ENCODE measurements at regions of chr21 and their contacts with region 1.

Region 1: DNA sequence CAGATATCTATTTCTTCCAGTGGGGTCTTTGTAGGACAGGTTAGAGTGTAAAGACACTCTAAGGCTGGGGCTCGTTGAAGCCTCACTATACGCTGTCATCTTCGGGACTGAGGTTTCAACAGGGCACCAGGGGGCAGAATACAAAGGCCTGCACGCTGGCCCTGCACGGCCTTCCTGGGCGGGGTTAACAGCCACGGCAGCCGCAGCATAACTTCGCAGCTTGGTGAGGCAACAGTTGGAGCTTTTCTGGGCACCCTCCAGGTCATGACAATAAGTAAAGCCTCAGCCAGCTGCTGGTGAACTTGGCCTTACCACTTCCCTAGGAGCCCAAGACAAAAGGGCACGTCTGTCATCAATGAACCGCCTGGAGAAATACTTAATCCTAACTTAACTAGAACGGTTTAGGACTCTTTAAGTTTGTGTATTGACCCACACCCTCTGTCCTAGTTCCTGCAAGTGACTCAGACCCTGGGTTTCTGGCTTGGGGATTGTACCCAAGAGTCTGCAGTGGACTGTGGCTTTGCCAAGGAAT is 2.3 kb upstream of the RUNX1 start:
- DNase-seq: peak; percentile 91
- ATAC-seq: peak; percentile 52
- H3K4me3 Mint-ChIP-seq: peak overlapping the region; percentile 87
- H3K27ac Mint-ChIP-seq: peak overlapping the region; percentile 95
- H3K4me1 Mint-ChIP-seq: peaks cover 49% of the 10 kb centered on the region
- H3K27me3 Mint-ChIP-seq: no peaks in the 10 kb centered on the region

Region 2: DNA sequence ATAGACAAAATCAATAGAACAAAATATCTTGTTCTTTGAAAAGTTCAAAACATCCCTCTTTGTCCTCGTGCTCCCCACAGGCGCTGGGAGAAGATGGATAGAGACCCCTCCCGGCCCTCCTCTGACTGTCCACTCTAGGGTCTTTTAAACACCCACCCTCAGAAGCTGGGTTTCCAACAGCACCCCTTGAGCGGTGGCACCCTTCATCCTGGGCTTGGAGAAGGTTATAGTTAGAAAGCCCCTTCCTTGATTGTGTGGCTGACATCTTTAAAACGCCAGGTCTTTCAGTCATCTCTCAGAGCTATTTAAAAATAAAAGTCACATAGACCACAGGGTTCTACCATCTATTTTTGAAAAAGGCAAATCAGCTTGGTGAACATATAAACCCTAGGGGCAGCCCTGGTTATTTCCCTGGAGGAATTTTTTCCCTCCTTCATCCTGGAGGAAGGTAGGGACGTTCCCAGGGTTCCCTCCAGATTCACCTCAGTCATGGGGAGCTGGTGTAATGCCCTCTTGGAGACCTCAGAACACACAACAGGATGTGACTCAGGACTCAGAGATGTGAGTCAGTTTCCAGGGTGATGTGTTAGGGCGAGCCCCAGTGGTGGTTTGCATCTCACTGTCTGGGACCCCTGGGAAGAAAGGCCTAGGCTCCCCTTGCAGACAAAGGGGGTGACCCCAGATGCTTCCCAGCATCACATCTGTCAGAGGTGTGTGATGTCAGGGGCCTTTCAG is 244.0 kb before region 1 on chr21:
- CTCF ChIA-PET with region 1: no interaction called
- POLR2A ChIA-PET with region 1: interaction called, 3 read pairs
- intact Hi-C with region 1: loop called (anchors 2 kb)
- DNase-seq: peak; percentile 83
- ATAC-seq: peak; percentile 92
- H3K4me3 Mint-ChIP-seq: no peak overlapping the region
- H3K27ac Mint-ChIP-seq: peak overlapping the region; percentile 87
- H3K4me1 Mint-ChIP-seq: peaks cover 90% of the 10 kb centered on the region
- H3K27me3 Mint-ChIP-seq: no peaks in the 10 kb centered on the region

Region 3: DNA sequence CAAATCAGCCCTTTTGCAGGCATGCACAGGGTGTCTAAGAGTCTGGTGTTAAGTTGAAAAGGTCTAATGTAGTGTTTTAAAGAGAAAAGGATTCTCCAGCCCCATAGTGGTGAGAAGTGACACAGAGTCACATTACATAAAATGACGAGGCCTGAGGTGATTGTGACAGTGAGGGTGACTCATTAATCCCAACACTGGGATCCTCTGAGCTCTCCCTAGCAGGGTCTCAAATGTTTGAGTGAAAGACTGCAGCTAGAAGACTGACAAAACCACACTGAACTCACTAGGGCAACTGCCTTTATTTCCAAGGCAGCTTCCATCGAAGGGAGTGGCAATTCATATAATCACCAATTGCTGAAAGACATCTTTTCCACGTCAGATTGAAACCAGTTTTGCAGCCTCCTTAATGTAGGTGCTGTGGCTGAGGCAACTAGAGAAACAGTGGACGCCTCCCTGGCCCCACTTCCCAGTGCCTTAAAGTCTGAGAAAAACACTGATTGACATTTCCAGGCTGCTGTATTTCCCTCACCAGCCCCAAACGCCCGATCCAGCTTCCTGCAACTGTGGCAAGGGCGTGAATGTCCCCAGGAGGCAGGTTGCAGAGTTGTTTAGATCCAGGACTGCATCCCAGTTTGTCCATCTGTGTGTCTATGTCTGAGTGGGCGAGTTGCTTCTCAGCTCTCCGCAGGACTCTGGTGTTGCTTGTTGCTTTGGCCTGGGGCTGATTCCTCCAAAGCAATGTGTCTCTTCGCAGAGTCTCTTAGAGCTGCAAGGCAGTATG is 83.7 kb before region 1 on chr21:
- CTCF ChIA-PET with region 1: interaction called, 5 read pairs
- POLR2A ChIA-PET with region 1: interaction called, 8 read pairs
- intact Hi-C with region 1: loop called in 1 of 2 experiments (anchors 1 kb)
- DNase-seq: peak; percentile 73
- ATAC-seq: peak; percentile 70
- H3K4me3 Mint-ChIP-seq: peak overlapping the region; percentile 61
- H3K27ac Mint-ChIP-seq: peak overlapping the region; percentile 99
- H3K4me1 Mint-ChIP-seq: peaks cover 91% of the 10 kb centered on the region
- H3K27me3 Mint-ChIP-seq: no peaks in the 10 kb centered on the region

Region 4: DNA sequence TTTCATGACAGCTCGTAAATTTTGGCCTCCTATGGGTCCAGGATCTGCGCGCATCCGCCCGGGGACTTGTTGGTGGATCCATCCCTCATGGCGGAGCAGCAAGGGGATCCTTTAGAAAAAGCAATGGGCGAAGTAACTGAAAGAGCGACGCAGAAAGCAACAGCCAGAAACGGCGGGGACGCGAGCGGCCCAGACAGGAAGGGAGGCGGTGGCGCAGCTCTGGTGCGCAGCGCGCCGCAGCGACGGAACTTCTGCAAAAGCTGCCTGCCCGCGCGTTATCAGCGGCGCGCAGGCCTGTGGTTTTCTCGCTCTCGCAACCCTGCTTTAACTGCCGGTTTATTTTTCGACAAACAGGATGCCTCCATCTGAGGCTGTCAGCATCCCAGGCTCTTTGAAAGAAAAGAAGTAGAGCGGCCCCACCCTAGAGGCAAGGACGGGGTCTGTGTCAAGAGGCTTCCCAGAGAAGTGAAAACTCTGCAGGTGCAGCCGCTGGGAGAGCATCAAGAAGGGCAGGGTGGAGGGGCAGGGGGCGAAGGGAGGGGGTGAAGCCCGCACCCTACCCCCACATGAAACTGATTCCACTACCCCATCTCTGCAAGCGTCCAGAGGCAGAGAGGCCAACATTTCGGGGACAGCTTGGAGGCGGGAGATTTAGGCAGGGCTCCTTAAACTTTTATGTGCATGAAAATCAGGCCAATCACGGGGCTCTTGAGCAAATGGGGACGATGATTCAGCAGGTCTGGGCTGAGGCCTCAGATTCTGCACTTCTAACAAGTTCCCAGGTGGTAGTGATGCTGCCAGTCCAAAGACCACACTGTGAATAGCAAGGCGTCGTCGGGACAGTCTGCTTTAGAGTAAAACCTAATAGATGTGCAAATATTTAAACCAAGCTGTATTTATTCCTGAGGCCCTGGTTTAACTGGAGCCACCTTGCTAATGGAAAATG is 24.5 kb before region 1 on chr21:
- CTCF ChIA-PET with region 1: interaction called, 19 read pairs
- POLR2A ChIA-PET with region 1: interaction called, 12 read pairs
- intact Hi-C with region 1: loop called in 1 of 2 experiments (anchors 1 kb)
- DNase-seq: peak; percentile 92
- ATAC-seq: peak; percentile 68
- H3K4me3 Mint-ChIP-seq: peak overlapping the region; percentile 75
- H3K27ac Mint-ChIP-seq: peak overlapping the region; percentile 97
- H3K4me1 Mint-ChIP-seq: peaks cover 88% of the 10 kb centered on the region
- H3K27me3 Mint-ChIP-seq: no peaks in the 10 kb centered on the region

Region 5: GRCh38 chr21:35138665-35139381 is 87.5 kb after region 1 on chr21:
- CTCF ChIA-PET with region 1: interaction called, 5 read pairs
- POLR2A ChIA-PET with region 1: interaction called, 6 read pairs
- intact Hi-C with region 1: loop called (anchors 1 to 2 kb)
- DNase-seq: peak; percentile 83
- ATAC-seq: peak; percentile 91
- H3K4me3 Mint-ChIP-seq: peak overlapping the region; percentile 65
- H3K27ac Mint-ChIP-seq: peak overlapping the region; percentile 93
- H3K4me1 Mint-ChIP-seq: peaks cover 38% of the 10 kb centered on the region
- H3K27me3 Mint-ChIP-seq: no peaks in the 10 kb centered on the region

Region 6: DNA sequence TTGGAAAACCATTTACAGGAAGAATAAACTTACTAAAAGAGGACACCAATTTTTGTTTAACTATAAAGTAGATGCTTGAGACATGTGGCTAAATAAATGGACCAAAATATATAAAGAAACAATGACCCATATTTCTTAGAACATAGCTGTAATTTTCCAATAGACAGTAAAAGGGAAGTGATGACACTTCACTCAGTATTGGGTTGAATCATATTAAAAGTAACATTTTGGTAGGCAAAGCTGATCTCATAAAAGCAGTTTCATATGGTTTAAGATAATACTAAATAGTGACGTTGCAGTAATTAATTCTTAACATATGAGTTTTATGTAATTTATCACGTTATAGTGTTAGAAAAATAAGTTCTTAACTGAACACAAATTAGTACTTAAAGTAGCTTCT is 306.7 kb after region 1 on chr21:
- CTCF ChIA-PET with region 1: no interaction called
- POLR2A ChIA-PET with region 1: interaction called, 3 read pairs
- intact Hi-C with region 1: loop called (anchors 5 kb)
- DNase-seq: no peak
- ATAC-seq: peak; percentile 86
- H3K4me3 Mint-ChIP-seq: no peak overlapping the region
- H3K27ac Mint-ChIP-seq: peak overlapping the region; percentile 74
- H3K4me1 Mint-ChIP-seq: peaks cover 15% of the 10 kb centered on the region
- H3K27me3 Mint-ChIP-seq: no peaks in the 10 kb centered on the region